PC-9 (cell line): ENCODE measurements at regions of chr1 and their contacts with region 1.

Region 1: GRCh38 chr1:43206600-43207228 is 34.6 kb downstream of the CFAP57 start:
- DNase-seq: peak; percentile 94 to 98
- H3K4me3 ChIP-seq: peak overlapping the region; percentile 39
- H3K27ac ChIP-seq: peak overlapping the region; percentile 95
- H3K4me1 ChIP-seq: peaks cover 40% of the 10 kb centered on the region
- H3K27me3 ChIP-seq: no peaks in the 10 kb centered on the region
- CTCF ChIP-seq: no peak

Region 2: DNA sequence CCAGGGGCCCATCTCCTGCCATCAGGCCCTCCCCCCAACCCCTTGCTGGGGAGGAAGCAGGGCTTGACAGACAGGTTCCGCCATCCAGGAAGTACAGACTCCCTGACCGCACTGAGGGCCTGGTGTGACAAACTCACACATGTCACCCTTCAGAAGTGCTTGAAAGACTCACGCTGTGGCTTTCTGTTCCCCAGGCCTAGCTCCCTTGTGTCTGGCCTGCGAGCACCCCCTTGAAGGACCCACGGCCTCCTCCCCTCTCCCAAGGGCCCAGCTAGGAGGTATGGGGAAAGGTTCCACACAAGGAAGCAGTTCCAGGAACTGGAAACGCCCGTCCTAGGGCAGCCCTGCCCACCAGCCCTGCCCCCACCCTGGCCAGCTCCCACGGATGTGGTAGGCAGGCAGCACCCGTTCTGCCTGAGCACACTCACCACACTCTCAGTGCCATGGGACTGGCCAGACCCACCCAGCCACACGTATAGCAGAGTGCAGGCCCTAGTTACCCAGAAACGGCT is 274.7 kb before region 1 on chr1:
- CTCF ChIA-PET with region 1: no interaction called
- POLR2A ChIA-PET with region 1: interaction called, 8 read pairs
- intact Hi-C with region 1: loop called (anchors 2 kb)
- DNase-seq: peak; percentile 86 to 92
- H3K4me3 ChIP-seq: no peak overlapping the region
- H3K27ac ChIP-seq: peak overlapping the region; percentile 69
- H3K4me1 ChIP-seq: peaks cover 60% of the 10 kb centered on the region
- H3K27me3 ChIP-seq: no peaks in the 10 kb centered on the region
- CTCF ChIP-seq: no peak

Region 3: DNA sequence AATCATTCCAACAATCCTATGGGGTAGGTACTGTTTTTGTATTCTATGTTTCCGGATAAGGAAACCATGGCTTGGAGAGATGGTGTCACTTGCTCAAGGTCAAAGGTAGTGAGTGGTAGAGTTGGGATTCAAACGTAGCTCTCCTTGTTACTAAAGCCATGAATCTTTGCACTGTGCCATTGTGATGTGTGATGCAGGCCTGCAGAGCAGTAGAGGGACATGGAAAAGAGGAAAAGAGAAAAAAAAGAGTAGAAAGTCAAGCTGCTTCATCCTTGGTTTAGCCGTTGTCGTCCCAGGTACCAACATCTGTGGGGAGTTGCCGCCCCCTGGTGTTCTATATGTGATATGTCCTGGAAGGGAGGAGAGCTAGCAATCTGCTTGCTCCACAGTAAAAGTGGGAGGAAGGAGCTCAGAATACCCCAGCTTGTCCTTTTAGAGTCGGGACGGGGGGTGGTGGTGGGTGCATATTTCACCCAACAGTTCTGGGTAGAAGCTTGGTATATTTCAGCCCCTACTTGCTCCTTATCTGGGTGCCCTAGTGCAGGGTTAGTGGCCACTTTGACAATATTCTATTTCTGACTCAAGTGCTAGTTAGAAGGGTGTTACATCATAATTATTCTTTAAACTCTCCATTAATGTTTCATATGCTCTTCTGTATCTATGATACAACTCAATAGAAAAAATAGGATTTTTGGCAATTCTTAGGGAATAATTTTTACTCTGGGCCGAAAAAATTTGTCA is 133.1 kb before region 1 on chr1:
- CTCF ChIA-PET with region 1: interaction called, 7 read pairs
- POLR2A ChIA-PET with region 1: no interaction called
- intact Hi-C with region 1: loop called (anchors 5 kb)
- DNase-seq: peak; percentile 63 to 83
- H3K4me3 ChIP-seq: no peak overlapping the region
- H3K27ac ChIP-seq: no peak overlapping the region
- H3K4me1 ChIP-seq: peaks cover 6% of the 10 kb centered on the region; the same call in 1 of the 2 replicates
- H3K27me3 ChIP-seq: no peaks in the 10 kb centered on the region
- CTCF ChIP-seq: peak; percentile 92

Region 4: DNA sequence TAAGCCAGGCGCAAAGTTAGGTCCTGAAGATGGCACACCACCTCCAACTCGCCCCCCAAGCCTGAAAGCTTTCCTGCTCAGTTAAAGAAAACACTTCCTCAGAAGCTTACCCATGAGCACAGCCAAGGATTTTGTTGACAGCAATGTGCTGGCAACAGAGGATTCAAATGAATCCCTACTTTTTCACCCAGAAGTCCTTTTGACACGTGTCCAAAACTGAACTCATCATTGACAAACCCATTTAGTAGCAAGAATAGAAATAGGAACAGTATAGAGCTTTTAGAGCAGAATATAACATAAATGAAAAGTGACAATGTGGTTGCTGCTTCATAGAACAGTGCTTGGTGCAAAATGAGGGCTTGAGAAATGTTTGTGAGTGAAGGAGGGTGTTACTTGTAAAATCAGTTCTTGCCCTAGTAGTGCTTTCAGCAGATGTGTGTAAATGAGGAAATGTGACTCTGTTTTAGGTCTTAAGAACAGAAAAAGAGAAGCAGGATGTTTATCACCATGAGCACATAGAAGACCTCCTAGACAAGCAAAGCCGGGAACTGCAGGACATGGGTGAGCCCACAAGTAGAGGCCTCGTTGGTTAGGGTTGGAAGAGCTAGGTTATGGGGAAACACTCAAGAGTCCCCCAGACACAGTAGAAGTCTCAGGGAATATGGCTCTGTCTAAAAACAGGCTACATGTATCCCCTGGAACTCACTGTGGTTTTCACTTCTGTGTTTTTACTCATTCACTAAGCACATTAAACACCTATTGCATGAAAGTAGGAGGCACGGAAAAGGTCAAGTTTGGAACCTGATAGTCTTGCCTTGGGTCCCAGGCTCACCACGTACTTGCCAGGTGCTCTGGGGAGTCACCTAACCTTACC is 14.4 kb after region 1 on chr1:
- CTCF ChIA-PET with region 1: no interaction called
- POLR2A ChIA-PET with region 1: interaction called, 12 read pairs
- intact Hi-C with region 1: no loop called
- DNase-seq: no peak
- H3K4me3 ChIP-seq: no peak overlapping the region
- H3K27ac ChIP-seq: no peak overlapping the region
- H3K4me1 ChIP-seq: no peaks in the 10 kb centered on the region
- H3K27me3 ChIP-seq: no peaks in the 10 kb centered on the region
- CTCF ChIP-seq: no peak

Region 5: DNA sequence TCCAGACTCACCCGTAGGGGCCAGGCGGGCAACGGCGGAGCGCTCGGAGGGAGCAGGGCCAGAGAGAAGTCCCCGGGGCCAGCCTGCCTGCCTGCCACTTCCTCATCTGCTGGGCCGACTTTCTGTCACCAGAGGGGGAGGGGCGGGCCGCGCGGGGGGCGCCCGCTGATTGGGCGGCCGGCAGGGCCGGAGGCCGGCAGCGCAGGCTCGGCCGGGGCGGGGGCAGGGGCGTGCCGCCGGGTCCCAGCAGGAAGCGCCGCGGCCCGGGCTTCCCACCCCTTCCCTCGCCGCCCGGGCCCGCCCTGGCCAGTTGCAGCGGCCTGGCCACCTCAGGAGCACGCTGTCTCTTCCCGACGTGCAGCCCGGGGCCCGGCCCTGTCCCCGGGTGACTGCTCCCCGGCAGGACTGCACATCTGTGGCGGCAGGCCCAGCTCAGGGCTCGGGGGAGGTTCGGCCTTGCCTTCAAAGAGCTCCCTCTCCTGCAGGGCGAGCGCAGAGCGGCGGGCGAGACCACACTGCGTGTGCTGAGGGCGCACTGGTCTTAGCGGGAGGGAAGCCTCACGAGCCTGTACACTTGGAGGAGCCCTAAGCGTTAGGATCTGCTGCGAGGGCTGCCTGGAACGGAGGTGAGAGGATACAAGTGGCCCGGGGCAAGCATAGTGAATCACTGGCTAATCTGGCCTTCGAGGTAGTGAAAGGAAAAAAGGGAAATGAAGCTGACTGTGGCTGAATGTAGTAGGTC is 161.4 kb after region 1 on chr1 and contains the start of gene ELOVL1:
- CTCF ChIA-PET with region 1: no interaction called
- POLR2A ChIA-PET with region 1: interaction called, 12 read pairs
- intact Hi-C with region 1: no loop called
- DNase-seq: peak; percentile 82 to 96
- H3K4me3 ChIP-seq: peak within 1 kb of the TSS; percentile 99
- H3K27ac ChIP-seq: peak within 1 kb of the TSS; percentile 89
- H3K4me1 ChIP-seq: peaks cover 69% of the 10 kb centered on the region
- H3K27me3 ChIP-seq: no peaks in the 10 kb centered on the region
- CTCF ChIP-seq: peak; percentile 33; the same call in 1 of the 2 replicates
- total RNA-seq, gene ELOVL1: 131 TPM in 2 replicates

Region 6: GRCh38 chr1:43395523-43395922 is 188.8 kb after region 1 on chr1:
- CTCF ChIA-PET with region 1: no interaction called
- POLR2A ChIA-PET with region 1: interaction called, 13 read pairs
- intact Hi-C with region 1: no loop called
- DNase-seq: no peak
- H3K4me3 ChIP-seq: no peak overlapping the region
- H3K27ac ChIP-seq: no peak overlapping the region
- H3K4me1 ChIP-seq: peaks cover 5% of the 10 kb centered on the region; the same call in 1 of the 2 replicates
- H3K27me3 ChIP-seq: no peaks in the 10 kb centered on the region
- CTCF ChIP-seq: no peak